Vagina (tissue), 2 donors: ENCODE measurements at regions of chr11 and their contacts with region 1.

Region 1: DNA sequence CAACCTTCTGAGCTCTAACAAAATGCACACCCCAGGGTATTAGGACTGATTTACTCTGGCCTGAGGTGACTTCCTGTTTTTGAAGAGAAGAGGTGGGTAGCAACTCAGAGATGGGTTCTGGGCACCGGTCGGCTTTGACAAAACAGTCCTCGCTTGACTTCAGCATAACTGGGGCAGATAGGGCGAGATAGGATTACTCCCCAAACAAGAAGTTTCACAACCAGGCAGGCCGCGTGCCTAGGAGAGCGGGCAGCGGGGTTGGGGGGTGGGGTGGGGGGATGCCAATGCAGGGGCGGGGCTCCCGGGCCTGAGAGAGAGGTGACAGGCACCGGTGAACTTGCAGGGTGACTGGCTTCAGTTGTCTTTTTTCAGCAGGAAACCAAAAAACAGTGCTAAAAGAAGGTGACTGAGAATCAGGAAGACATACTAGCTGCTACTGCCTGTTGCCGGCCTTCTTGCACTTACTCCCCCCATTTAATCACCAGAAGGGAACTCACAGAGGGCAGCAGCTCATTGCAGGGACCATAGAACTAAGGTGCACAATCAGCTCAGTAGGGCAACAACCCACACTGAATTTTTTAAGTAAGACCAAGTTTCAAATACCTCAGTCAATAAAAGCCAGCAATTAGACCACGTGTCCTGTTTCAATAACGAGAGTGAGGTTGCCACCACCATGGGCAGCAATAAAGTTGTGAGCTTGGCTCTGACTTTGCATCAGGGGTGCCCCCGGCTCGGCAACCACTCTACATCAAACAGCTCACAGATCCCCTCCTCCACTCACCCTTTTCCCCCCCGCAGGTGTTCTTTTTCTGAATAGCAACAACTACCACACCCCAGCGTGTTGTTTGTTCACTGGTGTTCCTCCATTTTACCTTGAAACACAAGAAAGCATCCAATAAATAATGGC is 37.2 kb upstream of the ETS1 start:
- DNase-seq: no peak
- H3K4me3 ChIP-seq: no peak overlapping the region
- H3K27ac ChIP-seq: no peak overlapping the region
- H3K4me1 ChIP-seq: peaks cover 17% of the 10 kb centered on the region
- H3K27me3 ChIP-seq: no peaks in the 10 kb centered on the region
- CTCF ChIP-seq: no peak
- POLR2A ChIP-seq: no peak

Region 2: DNA sequence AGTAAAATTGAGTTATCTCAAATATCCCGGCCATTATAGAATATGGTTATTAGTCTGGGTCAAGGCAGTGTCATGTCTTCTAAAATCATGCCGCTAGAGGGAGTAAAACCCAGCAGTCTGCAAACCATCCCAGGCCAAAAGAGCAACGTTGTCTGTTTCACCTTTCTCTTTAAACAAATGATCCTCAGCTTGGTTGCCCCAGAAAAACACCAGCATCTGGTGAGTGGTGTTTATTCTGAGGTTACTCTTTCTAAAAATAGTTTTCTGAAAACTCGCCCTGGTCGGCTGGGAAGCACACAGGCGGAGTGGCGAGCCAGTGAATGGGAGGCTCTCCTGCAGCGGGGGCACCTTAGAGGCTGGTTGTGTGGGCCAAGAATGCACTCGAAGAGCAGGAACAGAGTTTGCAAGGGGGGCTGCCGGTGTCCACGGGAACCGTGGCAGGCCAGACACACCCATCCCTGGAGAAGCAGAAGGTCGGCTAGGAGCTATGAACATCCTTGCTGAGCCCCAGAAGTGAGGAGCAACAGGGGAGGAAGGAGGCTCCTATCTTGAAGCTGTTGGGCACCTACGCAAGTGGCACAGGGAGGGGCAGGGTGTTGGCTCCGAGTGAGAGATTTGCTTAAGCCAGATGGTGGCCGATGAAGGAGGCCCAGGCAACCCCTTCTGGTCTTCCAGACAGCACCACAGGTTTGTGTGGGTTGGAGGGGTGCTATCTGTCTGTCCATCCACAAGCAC is 334.2 kb before region 1 on chr11:
- intact Hi-C with region 1: loop called (anchors 5 kb)
- DNase-seq: no peak
- H3K4me3 ChIP-seq: peak overlapping the region in 1 of 2 donors; percentile 7
- H3K27ac ChIP-seq: peak overlapping the region; percentile 50
- H3K4me1 ChIP-seq: peaks cover 20% of the 10 kb centered on the region
- H3K27me3 ChIP-seq: no peaks in the 10 kb centered on the region
- CTCF ChIP-seq: peak; percentile 56 to 90 (median 88)
- POLR2A ChIP-seq: no peak

Region 3: GRCh38 chr11:129077191-129077590 is 452.7 kb after region 1 on chr11:
- intact Hi-C with region 1: no loop called
- DNase-seq: no peak
- H3K4me3 ChIP-seq: no peak overlapping the region
- H3K27ac ChIP-seq: no peak overlapping the region
- H3K4me1 ChIP-seq: no peaks in the 10 kb centered on the region
- H3K27me3 ChIP-seq: no peaks in the 10 kb centered on the region
- CTCF ChIP-seq: no peak
- POLR2A ChIP-seq: no peak